ENCODE measurements at regions of chr13 and their contacts with region 1.

Region 1: GRCh38 chr13:32427852-32428580 is at the start of gene N4BP2L1:
- DNase-seq: peak; percentile 74
- H3K4me3 Mint-ChIP-seq: peak within 1 kb of the TSS; percentile 97
- H3K27ac Mint-ChIP-seq: peak within 1 kb of the TSS; percentile 98
- H3K4me1 Mint-ChIP-seq: peaks cover 53% of the 10 kb centered on the region
- H3K27me3 Mint-ChIP-seq: no peaks in the 10 kb centered on the region
- total RNA-seq, gene N4BP2L1: 17.7 and 20.0 TPM in 2 replicates

Region 2: GRCh38 chr13:32031025-32031814 is 396.8 kb before region 1 on chr13 and contains the start of gene FRY:
- intact Hi-C with region 1: loop called (anchors 5 kb)
- DNase-seq: peak; percentile 44
- H3K4me3 Mint-ChIP-seq: peak within 1 kb of the TSS; percentile 94
- H3K27ac Mint-ChIP-seq: peak within 1 kb of the TSS; percentile 82
- H3K4me1 Mint-ChIP-seq: peaks cover 52% of the 10 kb centered on the region
- H3K27me3 Mint-ChIP-seq: peaks cover 6% of the 10 kb centered on the region
- total RNA-seq, gene FRY: 2.4 and 3.2 TPM in 2 replicates

Region 3: DNA sequence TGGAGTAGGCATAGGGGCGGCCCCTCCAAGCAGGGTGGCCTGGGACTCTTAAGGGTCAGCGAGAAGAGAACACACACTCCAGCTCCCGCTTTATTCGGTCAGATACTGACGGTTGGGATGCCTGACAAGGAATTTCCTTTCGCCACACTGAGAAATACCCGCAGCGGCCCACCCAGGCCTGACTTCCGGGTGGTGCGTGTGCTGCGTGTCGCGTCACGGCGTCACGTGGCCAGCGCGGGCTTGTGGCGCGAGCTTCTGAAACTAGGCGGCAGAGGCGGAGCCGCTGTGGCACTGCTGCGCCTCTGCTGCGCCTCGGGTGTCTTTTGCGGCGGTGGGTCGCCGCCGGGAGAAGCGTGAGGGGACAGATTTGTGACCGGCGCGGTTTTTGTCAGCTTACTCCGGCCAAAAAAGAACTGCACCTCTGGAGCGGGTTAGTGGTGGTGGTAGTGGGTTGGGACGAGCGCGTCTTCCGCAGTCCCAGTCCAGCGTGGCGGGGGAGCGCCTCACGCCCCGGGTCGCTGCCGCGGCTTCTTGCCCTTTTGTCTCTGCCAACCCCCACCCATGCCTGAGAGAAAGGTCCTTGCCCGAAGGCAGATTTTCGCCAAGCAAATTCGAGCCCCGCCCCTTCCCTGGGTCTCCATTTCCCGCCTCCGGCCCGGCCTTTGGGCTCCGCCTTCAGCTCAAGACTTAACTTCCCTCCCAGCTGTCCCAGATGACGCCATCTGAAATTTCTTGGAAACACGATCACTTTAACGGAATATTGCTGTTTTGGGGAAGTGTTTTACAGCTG is 112.6 kb before region 1 on chr13 and contains the starts of genes BRCA2 and ZAR1L:
- intact Hi-C with region 1: loop called (anchors 1 kb)
- DNase-seq: peak; percentile 86
- H3K4me3 Mint-ChIP-seq: peak within 1 kb of the TSS; percentile 96
- H3K27ac Mint-ChIP-seq: peak within 1 kb of the TSS; percentile 100
- H3K4me1 Mint-ChIP-seq: peaks cover 48% of the 10 kb centered on the region
- H3K27me3 Mint-ChIP-seq: no peaks in the 10 kb centered on the region
- total RNA-seq, gene BRCA2: 16.7 and 18.9 TPM in 2 replicates
- total RNA-seq, gene ZAR1L: not detected in 2 replicates

Region 4: GRCh38 chr13:32443111-32443510 is 15.1 kb after region 1 on chr13:
- intact Hi-C with region 1: no loop called
- DNase-seq: no peak
- H3K4me3 Mint-ChIP-seq: no peak overlapping the region
- H3K27ac Mint-ChIP-seq: no peak overlapping the region
- H3K4me1 Mint-ChIP-seq: peaks cover 16% of the 10 kb centered on the region
- H3K27me3 Mint-ChIP-seq: no peaks in the 10 kb centered on the region

Region 5: DNA sequence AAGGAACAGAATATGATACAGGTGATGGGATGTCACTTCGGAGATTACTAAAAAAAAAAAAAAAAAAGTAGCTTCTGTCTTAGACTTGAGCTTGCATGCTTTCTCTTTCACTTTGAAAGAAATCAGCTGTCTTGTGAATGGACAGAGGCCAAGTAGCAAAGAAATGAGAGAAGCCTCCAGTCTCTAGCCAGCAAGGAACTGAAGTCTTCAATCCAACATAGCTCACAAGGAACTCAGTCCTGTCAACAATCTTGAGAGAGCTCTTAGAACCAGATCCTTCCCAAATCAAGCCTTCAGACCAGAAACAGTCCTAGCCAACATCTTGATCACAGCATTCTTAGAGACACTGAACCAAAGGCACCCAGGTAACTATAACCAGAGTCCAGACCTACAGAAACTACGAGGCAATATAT is 102.8 kb after region 1 on chr13:
- intact Hi-C with region 1: loop called (anchors 2 kb)
- DNase-seq: no peak
- H3K4me3 Mint-ChIP-seq: peak overlapping the region; percentile 84
- H3K27ac Mint-ChIP-seq: peak overlapping the region; percentile 86
- H3K4me1 Mint-ChIP-seq: peaks cover 74% of the 10 kb centered on the region
- H3K27me3 Mint-ChIP-seq: no peaks in the 10 kb centered on the region

Region 6: GRCh38 chr13:32650705-32651311 is 222.8 kb after region 1 on chr13:
- intact Hi-C with region 1: loop called (anchors 2 kb)
- DNase-seq: peak; percentile 42
- H3K4me3 Mint-ChIP-seq: no peak overlapping the region
- H3K27ac Mint-ChIP-seq: no peak overlapping the region
- H3K4me1 Mint-ChIP-seq: peaks cover 52% of the 10 kb centered on the region
- H3K27me3 Mint-ChIP-seq: no peaks in the 10 kb centered on the region

Region 7: DNA sequence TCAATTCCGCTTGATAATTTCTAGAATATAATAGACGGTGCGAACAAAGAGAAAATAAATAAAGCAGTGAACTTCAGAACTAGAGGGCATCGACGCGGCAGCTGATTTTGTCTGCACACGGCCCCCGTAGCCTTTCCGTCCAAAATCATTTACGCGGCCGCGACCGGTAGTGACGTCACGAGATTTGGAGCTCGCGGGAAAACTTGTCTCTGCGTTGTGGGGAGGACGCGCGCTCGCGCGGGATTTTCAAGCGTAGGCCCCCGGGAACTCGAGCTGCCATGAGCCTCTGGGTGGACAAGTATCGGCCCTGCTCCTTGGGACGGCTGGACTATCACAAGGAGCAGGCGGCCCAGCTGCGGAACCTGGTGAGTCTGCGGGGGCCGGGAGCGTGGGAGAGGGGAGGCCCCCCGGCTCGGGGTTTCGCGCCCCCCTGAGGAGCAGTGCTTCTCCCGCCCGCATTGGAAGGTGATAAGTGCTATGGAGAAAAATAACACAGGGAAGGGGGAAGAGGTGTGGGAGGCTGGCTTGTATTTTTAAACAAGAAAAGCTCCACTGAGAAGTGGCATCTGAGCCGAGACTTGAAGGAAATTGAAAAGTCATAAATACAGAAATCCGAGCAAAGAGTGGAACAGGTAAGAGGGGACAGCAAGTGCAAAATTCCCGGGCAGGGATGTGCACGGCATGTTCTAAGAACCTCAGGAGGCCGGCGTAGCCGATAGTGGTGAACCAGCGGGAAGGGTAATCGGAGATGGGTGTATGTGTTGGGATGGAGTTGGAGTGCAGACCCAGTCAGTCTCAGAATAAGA is 1390.1 kb after region 1 on chr13 and contains the start of gene RFC3:
- intact Hi-C with region 1: loop called (anchors 5 kb)
- DNase-seq: peak; percentile 90
- H3K4me3 Mint-ChIP-seq: peak within 1 kb of the TSS; percentile 97
- H3K27ac Mint-ChIP-seq: peak within 1 kb of the TSS; percentile 90
- H3K4me1 Mint-ChIP-seq: peaks cover 46% of the 10 kb centered on the region
- H3K27me3 Mint-ChIP-seq: peaks cover 8% of the 10 kb centered on the region
- total RNA-seq, gene RFC3: 74.7 and 78.0 TPM in 2 replicates